Naive thymus-derived CD4-positive, alpha-beta T cell (primary cell): ENCODE measurements at regions of chr19 and their contacts with region 1.

Region 1: DNA sequence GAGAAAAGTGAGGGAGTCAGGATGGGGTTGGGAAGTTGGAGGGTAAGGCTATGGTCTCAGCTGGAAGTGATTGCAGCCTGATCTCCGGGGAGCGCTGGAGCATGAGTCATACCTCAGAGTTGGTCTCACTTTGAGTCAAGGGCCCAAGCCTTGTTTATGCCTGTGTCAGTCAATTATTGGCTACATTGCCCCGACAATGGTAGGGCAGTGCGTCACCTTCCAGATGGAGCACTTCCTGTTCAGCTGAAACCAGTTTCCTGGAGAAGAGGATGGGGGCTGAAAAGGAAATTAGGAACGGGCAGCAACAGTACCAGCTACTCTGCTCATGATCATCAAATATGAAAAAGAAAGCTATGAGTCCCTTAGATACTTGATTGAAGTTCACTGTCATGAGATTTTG is 60.4 kb downstream of the ADGRE1 start:
- DNase-seq: peak in 1 of 9 donors; percentile 48
- ATAC-seq: no peak
- H3K4me3 ChIP-seq: no peak overlapping the region
- H3K4me3 Mint-ChIP-seq: peak overlapping the region in 4 of 10 donors; percentile 36 to 65 (median 46)
- H3K27ac ChIP-seq: no peak overlapping the region
- H3K27ac Mint-ChIP-seq: peak overlapping the region in 5 of 9 donors; percentile 12 to 79 (median 68)
- H3K4me1 ChIP-seq: no peaks in the 10 kb centered on the region
- H3K4me1 Mint-ChIP-seq: peaks cover 7 to 26% (median 17%) of the 10 kb centered on the region in 7 donors
- H3K27me3 ChIP-seq: no peaks in the 10 kb centered on the region
- H3K27me3 Mint-ChIP-seq: peaks cover 0 to 2% (median 0%) of the 10 kb centered on the region in 5 donors

Region 2: GRCh38 chr19:7004313-7004931 is 56.7 kb after region 1 on chr19:
- CTCF ChIA-PET with region 1: interaction called, 3 read pairs
- POLR2A ChIA-PET with region 1: no interaction called
- intact Hi-C with region 1: loop called in 1 of 2 experiments (anchors 10 kb)
- DNase-seq: peak in 5 of 9 donors; percentile 14 to 55 (median 54)
- ATAC-seq: peak; percentile 67
- H3K4me3 ChIP-seq: no peak overlapping the region
- H3K4me3 Mint-ChIP-seq: peak overlapping the region in 4 of 10 donors; percentile 26 to 45 (median 28)
- H3K27ac ChIP-seq: no peak overlapping the region
- H3K27ac Mint-ChIP-seq: no peak overlapping the region
- H3K4me1 ChIP-seq: peaks cover 11 to 18% of the 10 kb centered on the region in 2 donors
- H3K4me1 Mint-ChIP-seq: peaks cover 20 to 65% (median 40%) of the 10 kb centered on the region in 7 donors
- H3K27me3 ChIP-seq: no peaks in the 10 kb centered on the region
- H3K27me3 Mint-ChIP-seq: peaks cover 0 to 2% (median 0%) of the 10 kb centered on the region in 5 donors